Endothelial cell of umbilical vein (primary cell): ENCODE measurements at regions of chr21 and their contacts with region 1.

Region 1: GRCh38 chr21:33924079-33924765 is 8.6 kb upstream of the ATP5PO start:
- DNase-seq: peak; percentile 78
- H3K4me3 ChIP-seq: no peak overlapping the region
- H3K27ac ChIP-seq: no peak overlapping the region
- H3K4me1 ChIP-seq: no peaks in the 10 kb centered on the region
- H3K27me3 ChIP-seq: peaks cover 5 to 6% of the 10 kb centered on the region in 2 experiments
- CTCF ChIP-seq: peak; percentile 85 to 86
- POLR2A ChIP-seq: no peak

Region 2: DNA sequence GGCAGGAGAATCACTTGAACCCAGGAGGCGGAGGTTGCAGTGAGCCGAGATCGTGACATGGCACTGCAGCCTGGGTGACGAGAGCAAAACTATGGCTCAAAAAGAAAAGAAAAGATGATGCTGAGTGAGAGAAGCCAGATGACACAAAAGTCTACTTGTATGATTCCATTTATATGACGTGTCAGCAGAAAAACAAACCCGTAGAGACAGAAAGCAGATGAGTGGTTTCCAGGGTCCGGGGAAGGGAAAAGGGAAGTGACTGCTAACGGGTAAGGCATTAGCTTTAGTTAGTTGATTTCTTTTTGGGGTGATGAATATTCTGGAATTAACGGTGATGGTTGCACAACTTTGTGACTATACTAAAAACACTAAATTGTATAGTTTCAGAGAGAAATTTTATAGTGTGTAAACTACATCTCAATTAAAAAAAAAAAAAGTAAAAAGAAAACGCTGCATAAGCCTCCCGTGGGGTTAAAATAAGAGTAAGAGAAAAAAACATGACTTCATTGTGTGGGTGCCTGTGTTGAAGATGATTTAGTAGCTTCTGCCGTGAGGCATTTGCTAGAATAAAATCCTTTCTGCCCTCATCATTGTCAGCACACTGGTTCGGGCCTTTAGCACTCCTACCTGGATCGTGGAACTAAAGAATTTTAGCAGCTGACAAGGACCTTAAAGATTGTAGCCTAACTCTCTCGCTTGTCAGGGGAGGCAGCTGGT is 16.1 kb after region 1 on chr21:
- CTCF ChIA-PET with region 1: interaction called, 21 read pairs
- POLR2A ChIA-PET with region 1: no interaction called
- dilution Hi-C with region 1: no loop called
- intact Hi-C with region 1: no loop called
- DNase-seq: no peak
- H3K4me3 ChIP-seq: no peak overlapping the region
- H3K27ac ChIP-seq: no peak overlapping the region
- H3K4me1 ChIP-seq: no peaks in the 10 kb centered on the region
- H3K27me3 ChIP-seq: no peaks in the 10 kb centered on the region
- CTCF ChIP-seq: no peak
- POLR2A ChIP-seq: no peak

Region 3: GRCh38 chr21:34017039-34017961 is 93.1 kb after region 1 on chr21:
- CTCF ChIA-PET with region 1: interaction called, 10 read pairs
- POLR2A ChIA-PET with region 1: no interaction called
- dilution Hi-C with region 1: no loop called
- intact Hi-C with region 1: no loop called
- DNase-seq: no peak
- H3K4me3 ChIP-seq: no peak overlapping the region
- H3K27ac ChIP-seq: no peak overlapping the region
- H3K4me1 ChIP-seq: no peaks in the 10 kb centered on the region
- H3K27me3 ChIP-seq: peaks cover 3 to 13% of the 10 kb centered on the region in 2 experiments
- CTCF ChIP-seq: no peak
- POLR2A ChIP-seq: no peak

Region 4: GRCh38 chr21:34100790-34101189 is 176.6 kb after region 1 on chr21:
- CTCF ChIA-PET with region 1: interaction called, 14 read pairs
- POLR2A ChIA-PET with region 1: no interaction called
- dilution Hi-C with region 1: no loop called
- intact Hi-C with region 1: no loop called
- DNase-seq: no peak
- H3K4me3 ChIP-seq: no peak overlapping the region
- H3K27ac ChIP-seq: no peak overlapping the region
- H3K4me1 ChIP-seq: no peaks in the 10 kb centered on the region
- H3K27me3 ChIP-seq: no peaks in the 10 kb centered on the region
- CTCF ChIP-seq: no peak
- POLR2A ChIP-seq: no peak

Region 5: DNA sequence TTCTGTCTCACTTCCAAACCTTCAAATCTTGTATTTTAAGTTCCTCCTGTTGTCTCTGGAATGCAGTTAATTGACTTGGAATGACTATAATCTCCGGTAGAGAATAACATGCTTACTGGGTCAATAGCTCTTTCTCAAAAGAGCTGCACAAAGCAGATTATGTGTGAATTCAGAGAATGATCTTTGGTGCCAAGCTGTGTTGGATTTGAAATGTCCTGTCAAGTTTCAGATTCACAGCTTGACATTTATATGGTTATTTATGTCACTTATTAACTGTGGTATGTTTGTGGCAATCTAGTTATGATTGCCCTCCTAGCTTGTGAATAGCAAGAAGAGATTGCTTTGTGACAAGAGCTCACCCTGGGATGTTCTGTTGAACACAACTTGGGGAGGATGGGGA is 311.3 kb after region 1 on chr21:
- CTCF ChIA-PET with region 1: interaction called, 136 read pairs
- POLR2A ChIA-PET with region 1: no interaction called
- dilution Hi-C with region 1: no loop called
- intact Hi-C with region 1: no loop called
- DNase-seq: no peak
- H3K4me3 ChIP-seq: no peak overlapping the region
- H3K27ac ChIP-seq: no peak overlapping the region
- H3K4me1 ChIP-seq: no peaks in the 10 kb centered on the region
- H3K27me3 ChIP-seq: peaks cover 4 to 8% of the 10 kb centered on the region in 2 experiments
- CTCF ChIP-seq: no peak
- POLR2A ChIP-seq: no peak

Region 6: GRCh38 chr21:34351786-34352241 is 427.6 kb after region 1 on chr21:
- CTCF ChIA-PET with region 1: interaction called, 867 read pairs
- POLR2A ChIA-PET with region 1: no interaction called
- dilution Hi-C with region 1: no loop called
- intact Hi-C with region 1: loop called (anchors 1 kb)
- DNase-seq: peak; percentile 39
- H3K4me3 ChIP-seq: no peak overlapping the region
- H3K27ac ChIP-seq: no peak overlapping the region
- H3K4me1 ChIP-seq: no peaks in the 10 kb centered on the region
- H3K27me3 ChIP-seq: peaks cover 12 to 17% of the 10 kb centered on the region in 2 experiments
- CTCF ChIP-seq: peak; percentile 35 to 55
- POLR2A ChIP-seq: no peak